Dorsolateral prefrontal cortex (tissue), 120 donors: ENCODE measurements at regions of chr2 and their contacts with region 1.

Region 1: DNA sequence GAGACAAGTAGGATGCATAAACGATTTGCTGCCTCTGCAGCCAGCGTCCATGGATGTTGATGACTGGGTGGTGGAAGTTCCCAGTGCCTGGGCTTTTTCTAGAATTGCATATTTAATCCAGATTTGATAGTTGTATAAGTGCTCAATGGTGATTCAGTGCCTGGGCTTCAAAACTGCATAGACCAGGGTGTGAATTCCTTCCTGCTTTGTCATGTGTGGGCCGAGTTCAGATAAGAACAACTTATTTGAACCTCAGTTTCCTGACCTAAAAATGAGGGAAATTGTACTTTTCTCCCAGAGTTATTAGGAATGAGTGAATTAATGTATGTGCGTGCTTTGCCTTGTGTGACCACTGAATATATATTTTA is 154.6 kb downstream of the WDSUB1 start:
- DNase-seq: no peak
- H3K4me3 ChIP-seq: no peak overlapping the region
- H3K27ac ChIP-seq: peak overlapping the region in 1 of 59 donors; percentile 14
- H3K27me3 ChIP-seq: no peaks in the 10 kb centered on the region
- CTCF ChIP-seq: no peak

Region 2: DNA sequence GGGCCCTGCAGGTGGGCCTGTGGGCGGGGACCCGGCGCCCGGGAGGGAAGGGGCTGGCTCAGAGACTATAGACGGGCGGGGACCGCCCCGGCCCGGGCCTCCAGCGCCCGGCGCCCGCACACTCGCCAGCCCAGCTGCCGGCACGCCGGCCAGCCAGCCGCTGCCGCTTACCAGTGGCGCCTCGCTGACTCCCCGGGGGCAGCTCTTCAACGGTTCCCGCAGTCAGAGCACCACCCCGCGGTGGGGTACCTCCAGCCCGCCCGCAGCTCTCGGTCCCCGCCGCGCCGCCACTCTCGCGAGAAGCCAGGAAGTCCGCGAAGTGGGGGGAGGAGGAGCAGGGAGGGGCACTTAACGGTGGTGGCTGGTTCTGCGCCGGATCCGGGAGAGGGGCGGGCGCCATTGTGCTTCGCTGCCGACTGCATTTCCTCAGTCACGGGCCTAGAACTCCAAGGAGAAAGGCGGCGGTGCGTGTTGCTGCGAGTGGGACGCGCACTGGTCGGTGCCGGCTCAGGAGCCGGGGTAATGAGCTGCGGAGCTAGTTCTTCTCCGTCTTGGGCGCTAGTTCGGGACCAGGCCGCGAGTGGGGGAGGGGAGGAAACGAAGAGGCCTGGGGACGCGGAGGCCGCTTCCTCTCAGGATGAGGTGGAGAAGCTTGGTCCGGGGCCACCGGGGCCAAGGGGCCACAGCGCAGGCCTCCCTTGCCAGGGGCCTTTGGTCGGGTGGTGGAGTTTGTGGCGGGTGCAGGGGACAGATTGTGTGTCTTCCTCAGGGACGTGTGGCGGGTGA is 580.4 kb after region 1 on chr2 and contains the start of gene MARCHF7:
- intact Hi-C with region 1: loop called in 1 of 2 experiments (anchors 5 kb)
- DNase-seq: peak; percentile 86 to 97 (median 94)
- H3K4me3 ChIP-seq: peak within 1 kb of the TSS; percentile 68 to 98 (median 92)
- H3K27ac ChIP-seq: peak within 1 kb of the TSS; percentile 84 to 99 (median 96)
- H3K27me3 ChIP-seq: no peaks in the 10 kb centered on the region
- CTCF ChIP-seq: peak in 54 of 56 donors; percentile 35 to 82 (median 60)
- total RNA-seq, gene MARCHF7: 45.9 to 95.4 (median 65.5) TPM

Region 3: GRCh38 chr2:159807183-159808031 is 675.5 kb after region 1 on chr2:
- intact Hi-C with region 1: loop called in 1 of 2 experiments (anchors 10 kb)
- DNase-seq: peak in 2 of 10 donors; percentile 21 to 25
- H3K4me3 ChIP-seq: no peak overlapping the region
- H3K27ac ChIP-seq: no peak overlapping the region
- H3K27me3 ChIP-seq: no peaks in the 10 kb centered on the region
- CTCF ChIP-seq: peak; percentile 54 to 84 (median 76)